Transverse colon (tissue), 4 donors: ENCODE measurements at regions of chr1 and their contacts with region 1.

Region 1: GRCh38 chr1:62746085-62746808 is 37.7 kb upstream of the ATG4C start:
- DNase-seq: no peak
- H3K4me3 ChIP-seq: no peak overlapping the region
- H3K27ac ChIP-seq: no peak overlapping the region
- H3K4me1 ChIP-seq: peaks cover 0 to 2% (median 0%) of the 10 kb centered on the region in 4 donors
- H3K27me3 ChIP-seq: no peaks in the 10 kb centered on the region
- CTCF ChIP-seq: peak; percentile 47 to 62 (median 54)
- EP300 ChIP-seq: no peak
- POLR2A ChIP-seq: no peak

Region 2: DNA sequence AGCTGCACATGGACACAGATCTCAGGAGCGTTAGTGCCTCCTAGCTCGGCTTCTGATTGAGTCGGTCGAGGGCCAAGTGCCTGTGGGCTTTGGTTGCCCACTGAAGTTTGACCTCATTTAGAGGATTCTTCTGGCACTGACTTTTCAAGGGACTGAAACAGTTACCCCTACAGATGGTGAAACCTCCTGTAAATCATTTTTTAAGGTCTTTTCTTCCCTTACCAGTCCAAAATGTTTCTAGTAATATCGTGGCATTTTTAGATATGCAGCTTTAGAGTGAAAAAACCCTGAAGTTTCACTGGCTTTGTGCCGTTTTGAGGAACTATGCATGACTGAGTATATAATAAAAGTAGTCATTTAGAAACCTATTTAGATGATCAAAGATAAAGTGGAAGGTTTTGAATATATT is 586.3 kb before region 1 on chr1:
- in situ Hi-C with region 1: loop called in 1 of 4 experiments (anchors 25 kb)
- intact Hi-C with region 1: no loop called
- DNase-seq: no peak
- H3K4me3 ChIP-seq: no peak overlapping the region
- H3K27ac ChIP-seq: no peak overlapping the region
- H3K4me1 ChIP-seq: no peaks in the 10 kb centered on the region
- H3K27me3 ChIP-seq: no peaks in the 10 kb centered on the region
- CTCF ChIP-seq: no peak
- EP300 ChIP-seq: no peak
- POLR2A ChIP-seq: no peak

Region 3: GRCh38 chr1:62508187-62508758 is 238.0 kb before region 1 on chr1:
- in situ Hi-C with region 1: loop called in 2 of 4 experiments (anchors 10 to 25 kb)
- intact Hi-C with region 1: loop called (anchors 5 kb)
- DNase-seq: no peak
- H3K4me3 ChIP-seq: no peak overlapping the region
- H3K27ac ChIP-seq: no peak overlapping the region
- H3K4me1 ChIP-seq: no peaks in the 10 kb centered on the region
- H3K27me3 ChIP-seq: no peaks in the 10 kb centered on the region
- CTCF ChIP-seq: peak; percentile 28 to 53 (median 46)
- EP300 ChIP-seq: no peak
- POLR2A ChIP-seq: no peak

Region 4: GRCh38 chr1:62514746-62515423 is 231.4 kb before region 1 on chr1:
- in situ Hi-C with region 1: loop called in 2 of 4 experiments (anchors 10 to 25 kb)
- intact Hi-C with region 1: no loop called
- DNase-seq: no peak
- H3K4me3 ChIP-seq: no peak overlapping the region
- H3K27ac ChIP-seq: no peak overlapping the region
- H3K4me1 ChIP-seq: peaks cover 0 to 18% (median 5%) of the 10 kb centered on the region in 4 donors
- H3K27me3 ChIP-seq: no peaks in the 10 kb centered on the region
- CTCF ChIP-seq: no peak
- EP300 ChIP-seq: no peak
- POLR2A ChIP-seq: no peak

Region 5: GRCh38 chr1:62530516-62531154 is 215.6 kb before region 1 on chr1:
- in situ Hi-C with region 1: loop called in 2 of 4 experiments (anchors 10 to 25 kb)
- intact Hi-C with region 1: no loop called
- DNase-seq: peak; percentile 46
- H3K4me3 ChIP-seq: no peak overlapping the region
- H3K27ac ChIP-seq: no peak overlapping the region
- H3K4me1 ChIP-seq: no peaks in the 10 kb centered on the region
- H3K27me3 ChIP-seq: no peaks in the 10 kb centered on the region
- CTCF ChIP-seq: peak; percentile 40 to 62 (median 55)
- EP300 ChIP-seq: no peak
- POLR2A ChIP-seq: no peak